ENCODE measurements at regions of chr18 and their contacts with region 1.

Region 1: DNA sequence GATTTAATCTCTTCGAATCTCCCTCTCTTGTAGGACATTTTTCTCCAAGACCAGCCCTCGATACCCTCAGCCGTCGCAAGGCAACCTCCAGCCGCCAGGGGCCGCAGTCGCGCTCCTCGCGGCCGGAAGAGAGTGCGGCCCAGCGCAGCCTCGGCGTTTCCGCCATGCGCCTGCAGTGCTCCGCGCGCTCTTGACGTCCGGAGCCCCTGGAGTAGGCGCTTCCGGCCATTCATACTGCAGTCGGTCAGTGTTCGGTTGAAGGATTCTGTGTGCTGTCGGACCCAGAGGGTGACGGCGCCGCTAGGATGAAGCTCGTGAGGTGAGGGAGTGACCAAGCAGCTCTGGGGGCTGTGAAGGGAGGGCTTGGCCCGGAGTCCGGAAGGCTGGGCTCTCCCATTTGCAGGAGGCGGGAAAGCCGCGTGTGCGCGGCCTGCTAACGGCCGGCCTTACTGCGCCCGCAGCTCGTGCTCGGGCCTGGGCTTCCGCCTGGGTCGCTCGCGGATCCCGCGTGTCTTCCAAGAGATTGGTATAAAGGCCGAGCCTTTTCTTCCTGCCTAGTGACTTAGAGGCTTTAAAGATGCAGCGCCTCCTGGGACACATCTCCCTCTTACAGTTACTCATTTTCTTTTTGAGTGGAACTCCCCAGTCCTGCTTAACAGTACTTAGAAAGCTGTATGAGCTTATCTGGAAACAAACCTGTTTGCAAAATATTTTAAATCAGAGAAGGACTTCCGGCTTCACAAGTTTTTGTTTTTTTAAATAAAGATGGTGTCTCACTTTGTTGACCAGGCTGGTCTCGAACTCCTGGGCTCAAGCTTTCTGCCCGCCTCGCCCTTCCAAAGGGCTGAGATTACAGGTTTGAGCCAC is at the start of gene SNRPD1:
- H3K4me3 Mint-ChIP-seq: peak within 1 kb of the TSS; percentile 97
- H3K27ac Mint-ChIP-seq: peak within 1 kb of the TSS; percentile 96
- H3K4me1 Mint-ChIP-seq: peaks cover 25% of the 10 kb centered on the region
- H3K27me3 Mint-ChIP-seq: no peaks in the 10 kb centered on the region

Region 2: GRCh38 chr18:21406111-21406510 is 206.2 kb before region 1 on chr18:
- intact Hi-C with region 1: no loop called
- H3K4me3 Mint-ChIP-seq: no peak overlapping the region
- H3K27ac Mint-ChIP-seq: no peak overlapping the region
- H3K4me1 Mint-ChIP-seq: no peaks in the 10 kb centered on the region
- H3K27me3 Mint-ChIP-seq: no peaks in the 10 kb centered on the region

Region 3: DNA sequence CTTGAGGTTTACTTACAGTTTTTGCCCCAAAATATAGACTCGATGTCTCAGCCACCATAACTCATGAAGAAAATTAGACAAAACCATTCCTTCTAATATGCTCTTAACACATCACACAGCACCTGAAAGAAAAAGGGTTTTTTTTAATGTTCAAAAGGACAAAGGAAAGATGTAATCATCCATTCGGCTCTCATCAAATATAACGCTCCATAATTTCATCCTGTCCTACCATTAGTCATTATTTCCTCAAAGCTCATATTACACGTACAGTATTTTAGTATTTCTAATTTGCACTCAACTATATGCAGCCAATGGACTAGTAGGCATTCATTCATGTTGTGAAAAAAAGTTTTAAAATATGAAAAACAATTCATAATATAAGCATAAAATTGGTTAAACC is 36.7 kb before region 1 on chr18:
- intact Hi-C with region 1: no loop called
- H3K4me3 Mint-ChIP-seq: no peak overlapping the region
- H3K27ac Mint-ChIP-seq: no peak overlapping the region
- H3K4me1 Mint-ChIP-seq: no peaks in the 10 kb centered on the region
- H3K27me3 Mint-ChIP-seq: no peaks in the 10 kb centered on the region

Region 4: DNA sequence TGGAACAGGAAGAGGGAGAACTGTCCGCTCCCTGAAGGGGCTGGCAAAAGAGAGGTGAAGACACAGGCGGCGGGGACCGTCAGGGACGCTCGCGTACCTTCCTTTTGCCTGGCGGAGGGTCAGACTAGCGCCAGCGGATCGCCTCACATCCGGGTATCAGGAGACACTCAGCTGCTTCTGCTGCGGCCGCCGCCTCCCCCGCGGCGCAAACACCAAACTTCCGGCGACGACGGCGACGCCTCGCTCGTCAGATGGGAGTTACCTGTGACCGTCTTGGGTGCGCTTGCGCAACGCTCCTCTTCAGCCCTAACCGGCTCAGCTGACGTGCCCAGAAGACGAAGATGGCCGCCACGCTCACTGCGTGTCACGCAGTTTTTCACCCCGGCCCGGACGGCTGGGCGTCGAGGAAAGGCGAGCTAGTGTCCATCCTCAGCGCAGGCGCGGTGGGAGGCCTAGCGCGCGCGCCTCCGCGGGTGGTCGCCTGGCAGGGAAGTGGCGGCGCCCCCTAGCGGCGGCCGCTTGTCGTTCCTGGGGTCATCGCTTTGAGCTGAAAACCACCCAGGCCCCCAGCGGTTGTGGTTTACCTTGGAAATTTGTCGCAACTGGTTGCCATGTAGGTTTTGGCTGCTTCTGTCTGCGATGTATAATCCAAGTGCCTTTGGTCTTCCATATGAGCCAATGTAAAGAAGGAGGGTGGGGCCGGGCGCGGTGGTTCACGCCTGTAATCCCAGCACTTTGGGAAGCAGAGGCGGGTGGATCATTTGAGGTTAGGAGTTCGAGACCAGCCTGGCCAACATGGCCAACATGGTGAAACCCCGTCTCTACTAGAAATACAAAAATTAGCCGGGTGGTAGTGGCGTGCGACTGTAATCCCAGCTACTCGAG is 11.6 kb before region 1 on chr18 and contains the start of gene ESCO1:
- intact Hi-C with region 1: loop called (anchors 1 kb)
- H3K4me3 Mint-ChIP-seq: peak within 1 kb of the TSS; percentile 95
- H3K27ac Mint-ChIP-seq: peak within 1 kb of the TSS; percentile 98
- H3K4me1 Mint-ChIP-seq: peaks cover 24% of the 10 kb centered on the region
- H3K27me3 Mint-ChIP-seq: no peaks in the 10 kb centered on the region

Region 5: GRCh38 chr18:21704603-21705364 is 92.4 kb after region 1 on chr18 and contains the start of gene ABHD3:
- intact Hi-C with region 1: loop called (anchors 2 kb)
- H3K4me3 Mint-ChIP-seq: peak within 1 kb of the TSS; percentile 94
- H3K27ac Mint-ChIP-seq: peak within 1 kb of the TSS; percentile 92
- H3K4me1 Mint-ChIP-seq: peaks cover 24% of the 10 kb centered on the region
- H3K27me3 Mint-ChIP-seq: no peaks in the 10 kb centered on the region

Measured in dendritic cell treated with granulocyte-macrophage colony-stimulating factor and Interleukin-4, amounts not matched to agents 40 ng/mL and 50 ng/mL, for 4 days (primary cell).